ENCODE measurements at regions of chr22 and their contacts with region 1.

Region 1: GRCh38 chr22:45863981-45864751 is 112.8 kb downstream of the WNT7B start:
- DNase-seq: peak; percentile 88
- ATAC-seq: peak; percentile 23
- H3K4me3 Mint-ChIP-seq: no peak overlapping the region
- H3K27ac Mint-ChIP-seq: no peak overlapping the region
- H3K4me1 Mint-ChIP-seq: peaks cover 24% of the 10 kb centered on the region
- H3K27me3 Mint-ChIP-seq: peaks cover 53% of the 10 kb centered on the region
- CTCF ChIP-seq: peak; percentile 97

Region 2: DNA sequence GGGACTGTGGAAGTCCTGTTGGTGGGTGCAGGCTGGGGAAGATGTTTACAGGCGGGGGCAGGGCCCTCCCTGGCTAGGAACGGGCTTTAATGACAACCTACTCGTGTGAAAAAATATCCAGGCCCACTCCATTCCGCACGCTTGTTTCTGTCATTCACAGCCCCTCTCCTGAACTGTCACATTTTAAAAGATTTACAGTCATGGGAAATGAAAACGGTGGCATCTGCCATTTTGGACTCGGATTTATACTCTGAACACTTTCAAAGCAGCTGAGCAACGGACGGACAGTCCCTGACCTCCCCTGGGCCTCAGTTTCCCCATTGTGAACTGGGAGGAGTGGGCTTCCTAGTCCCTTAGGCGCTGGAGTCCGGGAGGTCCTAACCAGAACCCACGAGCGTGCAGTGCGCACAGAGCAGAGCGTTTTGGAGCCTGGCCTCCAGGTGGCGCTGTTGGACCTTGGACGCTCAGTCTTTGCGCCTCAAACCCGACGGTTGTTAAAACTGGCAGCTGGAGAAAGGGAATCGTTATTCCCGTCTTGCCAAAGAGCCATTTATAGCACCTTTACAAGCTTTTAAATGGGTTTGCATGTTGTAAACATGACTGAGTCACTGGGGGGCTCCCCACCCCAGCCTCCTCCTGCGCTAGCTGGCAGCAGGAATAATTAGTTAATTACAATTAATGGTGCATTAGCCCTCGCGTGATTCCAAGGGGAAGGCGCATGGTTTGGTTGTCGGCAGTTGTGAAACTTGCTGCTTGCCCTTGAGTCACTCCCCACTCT is 286.2 kb before region 1 on chr22:
- CTCF ChIA-PET with region 1: interaction called, 28 read pairs
- POLR2A ChIA-PET with region 1: no interaction called
- DNase-seq: peak; percentile 89
- ATAC-seq: peak; percentile 79
- H3K4me3 Mint-ChIP-seq: no peak overlapping the region
- H3K27ac Mint-ChIP-seq: no peak overlapping the region
- H3K4me1 Mint-ChIP-seq: no peaks in the 10 kb centered on the region
- H3K27me3 Mint-ChIP-seq: no peaks in the 10 kb centered on the region
- CTCF ChIP-seq: peak; percentile 93

Region 3: DNA sequence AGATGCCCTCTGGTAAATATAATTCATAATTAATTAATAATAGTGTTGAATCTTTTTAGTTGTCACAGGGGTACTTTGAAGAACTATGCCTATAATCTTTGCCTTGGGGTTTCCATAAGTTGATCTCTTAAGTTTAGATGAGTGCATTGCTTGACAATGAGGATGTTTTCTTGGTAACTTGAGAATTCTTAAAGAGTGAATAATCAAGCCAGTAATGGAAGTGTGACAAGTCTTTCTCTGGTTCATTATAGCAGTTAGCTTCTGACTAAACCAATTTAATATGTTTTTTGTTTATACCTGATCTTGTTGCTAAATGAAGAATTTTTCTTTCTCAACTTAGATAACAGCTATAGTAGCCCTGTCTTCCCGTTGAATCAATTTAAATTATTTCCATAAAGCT is 146.4 kb before region 1 on chr22:
- CTCF ChIA-PET with region 1: no interaction called
- POLR2A ChIA-PET with region 1: no interaction called
- DNase-seq: no peak
- ATAC-seq: no peak
- H3K4me3 Mint-ChIP-seq: no peak overlapping the region
- H3K27ac Mint-ChIP-seq: no peak overlapping the region
- H3K4me1 Mint-ChIP-seq: no peaks in the 10 kb centered on the region
- H3K27me3 Mint-ChIP-seq: no peaks in the 10 kb centered on the region
- CTCF ChIP-seq: no peak

Region 4: DNA sequence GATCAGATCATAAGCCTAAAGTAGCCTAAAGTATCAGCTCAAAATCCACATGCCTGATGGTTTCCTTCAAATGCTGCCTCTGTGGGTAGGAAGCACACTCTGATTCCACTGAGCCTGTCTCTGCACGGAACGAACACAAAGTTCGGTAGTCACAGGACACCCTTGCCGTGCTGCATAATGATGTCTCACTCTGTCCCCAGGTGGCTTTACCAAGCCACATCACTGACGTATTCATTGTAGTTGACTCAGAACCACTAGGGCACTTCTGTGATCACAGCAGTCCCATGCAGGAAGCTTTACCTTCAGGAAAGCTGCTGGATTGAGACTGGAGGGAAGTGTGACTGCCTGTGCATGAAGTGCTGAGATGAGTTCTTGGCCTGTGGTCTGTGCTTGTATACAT is 44.9 kb before region 1 on chr22:
- CTCF ChIA-PET with region 1: interaction called, 10 read pairs
- POLR2A ChIA-PET with region 1: no interaction called
- DNase-seq: no peak
- ATAC-seq: no peak
- H3K4me3 Mint-ChIP-seq: no peak overlapping the region
- H3K27ac Mint-ChIP-seq: peak overlapping the region; percentile 31; the same call in 1 of the 2 replicates
- H3K4me1 Mint-ChIP-seq: peaks cover 10% of the 10 kb centered on the region
- H3K27me3 Mint-ChIP-seq: no peaks in the 10 kb centered on the region
- CTCF ChIP-seq: no peak

Region 5: DNA sequence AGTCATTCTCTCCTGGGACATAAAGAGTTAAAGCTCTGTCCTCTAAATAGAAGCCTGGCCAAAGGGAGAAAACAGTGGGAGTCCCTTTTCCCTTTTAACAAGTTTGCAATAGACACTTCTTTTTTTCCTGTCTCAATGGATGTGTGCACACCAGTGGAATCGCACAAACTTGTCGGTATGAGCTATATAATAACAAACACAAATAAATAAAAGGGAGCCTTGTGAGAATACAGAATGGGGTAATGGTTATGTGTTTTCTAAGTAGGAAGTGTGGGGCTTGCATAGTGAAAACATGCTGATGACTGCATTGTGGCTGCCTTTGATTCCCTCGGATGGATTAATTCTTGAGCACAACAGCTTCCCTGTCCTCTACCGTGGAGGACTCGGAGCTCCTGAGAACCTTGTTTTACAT is 19.1 kb before region 1 on chr22:
- CTCF ChIA-PET with region 1: interaction called, 18 read pairs
- POLR2A ChIA-PET with region 1: interaction called, 3 read pairs
- DNase-seq: no peak
- ATAC-seq: peak; percentile 55
- H3K4me3 Mint-ChIP-seq: peak overlapping the region; percentile 51
- H3K27ac Mint-ChIP-seq: peak overlapping the region; percentile 92
- H3K4me1 Mint-ChIP-seq: peaks cover 50% of the 10 kb centered on the region
- H3K27me3 Mint-ChIP-seq: no peaks in the 10 kb centered on the region
- CTCF ChIP-seq: no peak

Region 6: DNA sequence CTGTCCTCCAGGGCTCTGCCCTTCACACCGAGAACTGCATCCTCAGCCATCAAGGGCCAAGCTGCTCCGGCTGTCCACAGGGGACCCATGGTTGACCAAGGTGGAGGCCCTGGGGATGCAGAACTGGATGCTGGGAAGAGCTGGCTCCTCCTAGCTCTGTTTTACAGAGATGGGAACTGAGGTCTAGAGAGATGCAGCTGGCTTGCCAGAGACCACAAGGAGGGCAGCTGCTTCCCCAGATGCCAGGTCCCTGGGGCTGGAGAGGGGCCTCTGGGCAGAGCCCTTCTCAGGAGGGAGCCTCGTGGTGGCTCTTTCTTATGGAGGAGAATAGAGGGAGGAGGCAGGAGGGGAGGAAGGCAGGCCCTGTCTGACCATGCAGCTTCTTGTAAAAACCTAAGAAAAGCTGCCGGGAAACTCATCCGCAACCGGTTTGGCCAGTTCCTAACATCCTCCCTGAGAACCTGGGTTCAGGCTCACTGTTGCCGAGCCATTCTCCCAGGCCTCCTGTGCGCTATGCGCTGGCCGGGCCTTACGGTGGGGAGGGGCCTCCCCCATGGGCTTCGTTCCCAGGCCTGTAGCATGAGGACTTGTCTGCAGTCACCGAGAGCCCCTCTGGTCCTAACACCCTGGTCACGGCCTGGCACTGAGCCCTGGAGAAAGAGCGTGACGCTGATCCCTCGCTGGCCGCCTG is 32.2 kb after region 1 on chr22:
- CTCF ChIA-PET with region 1: interaction called, 25 read pairs
- POLR2A ChIA-PET with region 1: no interaction called
- DNase-seq: peak; percentile 69
- ATAC-seq: peak; percentile 90
- H3K4me3 Mint-ChIP-seq: no peak overlapping the region
- H3K27ac Mint-ChIP-seq: peak overlapping the region; percentile 65; the same call in 1 of the 2 replicates
- H3K4me1 Mint-ChIP-seq: peaks cover 14% of the 10 kb centered on the region
- H3K27me3 Mint-ChIP-seq: no peaks in the 10 kb centered on the region; the same call in 1 of the 2 replicates
- CTCF ChIP-seq: no peak

Measured in WTC11 (cell line).